AG04449 (cell line): ENCODE measurements at regions of chr19 and their contacts with region 1.

Region 1: DNA sequence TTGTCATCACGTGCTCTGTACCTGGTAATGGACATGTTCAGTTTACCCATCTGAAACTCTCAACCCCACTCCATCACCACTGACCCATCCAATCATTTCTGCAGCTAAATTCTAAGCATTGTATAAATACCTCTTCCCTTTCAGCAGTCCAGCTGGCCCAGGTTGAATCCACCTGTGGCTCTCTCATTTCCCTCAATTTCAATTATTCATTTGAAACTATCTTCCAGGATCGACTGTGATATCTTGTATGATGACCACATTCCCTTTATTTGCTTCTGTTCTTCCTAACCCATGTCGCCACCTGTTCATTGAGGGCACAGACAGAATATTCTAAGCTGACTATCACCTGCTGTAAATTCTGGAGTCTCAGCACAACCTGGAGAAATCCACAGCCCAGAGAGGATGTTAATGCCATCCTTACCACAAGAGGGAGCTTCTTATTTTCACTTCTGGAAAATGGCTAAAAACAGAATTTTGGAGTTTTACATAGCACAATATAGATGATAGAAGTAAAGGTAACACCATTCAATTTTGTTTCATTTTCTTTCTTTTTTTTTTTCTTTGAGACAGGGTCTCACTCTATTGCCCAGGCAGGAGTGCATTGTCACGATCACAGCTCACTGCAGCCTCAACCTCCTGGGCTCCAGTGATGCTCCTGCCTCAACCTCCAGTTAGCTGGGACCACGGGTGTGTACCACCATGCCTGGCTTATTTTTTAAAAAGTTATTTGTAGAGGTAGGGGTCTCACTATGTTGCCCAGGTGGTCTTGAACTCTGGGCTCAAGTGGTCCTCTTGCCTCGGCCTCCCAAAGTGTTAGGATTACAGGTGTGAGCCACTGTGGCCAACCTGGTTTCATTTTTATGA is 38.6 kb downstream of the ZNF823 start:
- DNase-seq: no peak
- H3K4me3 ChIP-seq: no peak overlapping the region
- CTCF ChIP-seq: peak; percentile 57

Region 2: GRCh38 chr19:11738746-11739620 is 38.8 kb after region 1 on chr19 and contains the start of gene ZNF823:
- CTCF ChIA-PET with region 1: interaction called, 10 read pairs
- POLR2A ChIA-PET with region 1: interaction called, 4 read pairs
- DNase-seq: peak; percentile 79
- H3K4me3 ChIP-seq: peak within 1 kb of the TSS; percentile 75
- CTCF ChIP-seq: no peak